Activated T-helper 2 cell treated with anti-CD3 and anti-CD28 coated beads, Interferon-gamma antibody, Interleukin-2, Interleukin-4, amounts not matched to agents 10 μg/mL and 5 μg/mL and 100 μg/mL, durations not matched to agents 14 hours and 24 hours and 36 hours (primary cell): ENCODE measurements at regions of chr13 and their contacts with region 1.

Region 1: GRCh38 chr13:57340878-57341277 is 173.9 kb downstream of the PRR20E start:
- DNase-seq: no peak
- H3K4me3 Mint-ChIP-seq: no peak overlapping the region
- H3K27ac Mint-ChIP-seq: no peak overlapping the region
- H3K4me1 Mint-ChIP-seq: no peaks in the 10 kb centered on the region
- H3K27me3 Mint-ChIP-seq: no peaks in the 10 kb centered on the region

Region 2: GRCh38 chr13:56850852-56851251 is 490.0 kb before region 1 on chr13:
- intact Hi-C with region 1: no loop called
- DNase-seq: no peak
- H3K4me3 Mint-ChIP-seq: no peak overlapping the region
- H3K27ac Mint-ChIP-seq: no peak overlapping the region
- H3K4me1 Mint-ChIP-seq: no peaks in the 10 kb centered on the region
- H3K27me3 Mint-ChIP-seq: no peaks in the 10 kb centered on the region

Region 3: DNA sequence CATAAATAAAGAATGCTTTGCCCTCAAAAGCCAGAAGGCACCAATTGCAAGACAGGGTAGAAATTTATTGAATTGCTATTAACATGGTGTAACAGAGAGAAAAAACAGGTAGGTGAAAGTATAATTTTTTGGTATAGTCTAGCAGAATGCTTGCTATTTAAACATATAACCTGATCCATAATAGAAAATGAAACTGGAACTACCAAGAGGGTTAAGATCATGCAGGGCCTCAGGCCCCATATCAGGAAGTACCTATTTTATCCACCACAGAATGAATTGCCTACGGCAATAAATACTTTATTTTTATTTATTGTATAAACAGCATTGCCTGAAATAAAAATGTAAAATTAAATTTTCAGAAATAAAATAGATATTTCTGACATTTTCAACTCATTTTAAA is 14.3 kb before region 1 on chr13:
- intact Hi-C with region 1: loop called (anchors 1 kb)
- DNase-seq: no peak
- H3K4me3 Mint-ChIP-seq: no peak overlapping the region
- H3K27ac Mint-ChIP-seq: no peak overlapping the region
- H3K4me1 Mint-ChIP-seq: no peaks in the 10 kb centered on the region
- H3K27me3 Mint-ChIP-seq: no peaks in the 10 kb centered on the region